CD4-positive, alpha-beta memory T cell (primary cell): ENCODE measurements at regions of chr2 and their contacts with region 1.

Region 1: GRCh38 chr2:180980106-180980942 is at the start of gene UBE2E3:
- DNase-seq: peak; percentile 77 to 83 (median 81)
- H3K4me3 ChIP-seq: peak within 1 kb of the TSS; percentile 59
- H3K4me3 Mint-ChIP-seq: peak within 1 kb of the TSS; percentile 94 to 99 (median 98)
- H3K27ac ChIP-seq: peak within 1 kb of the TSS; percentile 49
- H3K27ac Mint-ChIP-seq: peak within 1 kb of the TSS; percentile 89 to 98 (median 97)
- H3K4me1 ChIP-seq: peaks cover 35% of the 10 kb centered on the region
- H3K4me1 Mint-ChIP-seq: peaks cover 29 to 55% (median 44%) of the 10 kb centered on the region in 4 donors
- H3K27me3 ChIP-seq: no peaks in the 10 kb centered on the region
- H3K27me3 Mint-ChIP-seq: no peaks in the 10 kb centered on the region
- total RNA-seq, gene UBE2E3: 25.0 to 27.0 TPM

Region 2: DNA sequence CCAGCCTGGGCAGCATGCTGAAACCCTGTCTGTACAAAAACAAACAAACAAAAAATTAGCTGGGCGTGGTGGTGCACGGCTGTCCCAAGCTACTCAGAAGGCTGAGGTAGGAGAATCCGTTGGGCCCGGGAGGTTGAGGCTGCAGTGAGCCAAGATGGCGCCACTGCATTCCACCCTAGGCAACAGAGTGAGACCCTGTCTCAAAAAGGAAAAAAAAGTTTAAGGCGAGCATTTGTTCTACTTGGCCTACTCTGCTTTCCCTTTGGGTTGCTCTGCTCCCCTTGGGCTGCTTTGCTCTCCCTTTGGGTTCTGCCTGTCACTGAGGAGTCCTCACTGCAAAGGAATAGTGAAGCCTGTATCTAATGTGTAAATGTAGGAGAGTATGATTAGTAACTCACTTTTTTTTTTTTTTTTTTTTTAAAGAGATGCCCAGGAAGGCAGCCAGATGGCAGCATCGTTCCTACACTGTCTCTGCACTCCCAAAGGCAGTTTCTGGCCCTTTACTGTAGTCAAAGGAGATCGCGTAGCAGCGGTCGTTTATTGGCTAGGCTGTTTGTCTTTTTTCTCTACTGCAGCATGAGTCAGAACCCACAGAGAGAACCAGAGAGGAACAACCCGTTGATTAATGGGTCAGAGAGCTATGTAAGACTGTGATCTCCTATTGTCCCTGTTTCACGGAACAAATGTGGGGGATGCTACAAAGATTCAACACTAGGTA is 854.9 kb before region 1 on chr2:
- CTCF ChIA-PET with region 1: interaction called, 6 read pairs
- POLR2A ChIA-PET with region 1: no interaction called
- intact Hi-C with region 1: loop called (anchors 1 kb)
- DNase-seq: peak; percentile 28 to 44 (median 38)
- H3K4me3 ChIP-seq: no peak overlapping the region
- H3K4me3 Mint-ChIP-seq: peak overlapping the region in 1 of 8 donors; percentile 29
- H3K27ac ChIP-seq: no peak overlapping the region
- H3K27ac Mint-ChIP-seq: no peak overlapping the region
- H3K4me1 ChIP-seq: no peaks in the 10 kb centered on the region
- H3K4me1 Mint-ChIP-seq: peaks cover 0 to 7% (median 4%) of the 10 kb centered on the region in 4 donors
- H3K27me3 ChIP-seq: no peaks in the 10 kb centered on the region
- H3K27me3 Mint-ChIP-seq: peaks cover 0 to 7% of the 10 kb centered on the region in 2 donors

Region 3: GRCh38 chr2:180890781-180891180 is 89.5 kb before region 1 on chr2:
- CTCF ChIA-PET with region 1: no interaction called
- POLR2A ChIA-PET with region 1: no interaction called
- intact Hi-C with region 1: no loop called
- DNase-seq: no peak
- H3K4me3 ChIP-seq: no peak overlapping the region
- H3K4me3 Mint-ChIP-seq: no peak overlapping the region
- H3K27ac ChIP-seq: no peak overlapping the region
- H3K27ac Mint-ChIP-seq: no peak overlapping the region
- H3K4me1 ChIP-seq: no peaks in the 10 kb centered on the region
- H3K4me1 Mint-ChIP-seq: no peaks in the 10 kb centered on the region
- H3K27me3 ChIP-seq: no peaks in the 10 kb centered on the region
- H3K27me3 Mint-ChIP-seq: no peaks in the 10 kb centered on the region

Region 4: DNA sequence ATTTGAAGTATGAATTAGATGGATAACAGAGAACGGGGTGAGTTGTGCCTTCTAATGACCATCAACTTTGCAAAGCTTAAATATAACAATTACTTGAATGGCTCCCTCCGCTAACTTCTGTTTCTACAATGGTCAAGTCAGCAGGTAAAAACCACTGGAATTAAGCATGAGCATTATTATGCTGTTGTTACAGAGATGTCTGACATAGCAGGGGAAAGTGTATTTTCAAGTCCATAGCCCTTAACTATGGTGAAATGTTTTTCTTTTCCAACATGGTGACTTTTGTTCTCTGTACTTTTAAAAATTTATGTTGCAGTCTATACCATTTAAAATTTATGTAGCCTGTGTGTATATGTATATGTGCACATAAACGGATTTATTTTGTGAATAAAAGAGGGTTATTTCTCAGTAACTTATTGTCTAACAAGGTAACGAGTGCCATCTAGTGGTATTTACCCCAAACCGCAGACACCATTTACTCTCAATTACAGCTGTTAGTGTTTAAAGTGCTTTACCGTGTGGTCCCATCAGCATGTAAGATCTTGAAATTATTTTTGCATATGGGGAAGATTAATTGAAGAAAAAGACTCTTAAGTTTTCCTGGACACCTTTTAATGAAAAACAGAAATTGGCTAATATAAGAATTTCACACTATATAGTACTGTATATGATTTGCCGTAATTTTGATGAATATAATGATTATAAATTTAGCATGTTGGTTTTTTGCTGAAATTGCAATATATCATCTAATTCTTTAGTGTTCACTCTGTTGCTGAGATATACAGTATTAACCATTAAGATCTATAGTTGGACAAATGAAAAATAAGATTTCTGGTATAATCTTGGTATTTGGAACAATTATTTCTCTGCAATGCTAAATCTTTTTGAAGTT is 78.3 kb after region 1 on chr2:
- CTCF ChIA-PET with region 1: interaction called, 12 read pairs
- POLR2A ChIA-PET with region 1: interaction called, 3 read pairs
- intact Hi-C with region 1: loop called (anchors 5 kb)
- DNase-seq: peak; percentile 36 to 52 (median 45)
- H3K4me3 ChIP-seq: no peak overlapping the region
- H3K4me3 Mint-ChIP-seq: no peak overlapping the region
- H3K27ac ChIP-seq: no peak overlapping the region
- H3K27ac Mint-ChIP-seq: no peak overlapping the region
- H3K4me1 ChIP-seq: no peaks in the 10 kb centered on the region
- H3K4me1 Mint-ChIP-seq: peaks cover 0 to 12% (median 8%) of the 10 kb centered on the region in 4 donors
- H3K27me3 ChIP-seq: no peaks in the 10 kb centered on the region
- H3K27me3 Mint-ChIP-seq: no peaks in the 10 kb centered on the region

Region 5: DNA sequence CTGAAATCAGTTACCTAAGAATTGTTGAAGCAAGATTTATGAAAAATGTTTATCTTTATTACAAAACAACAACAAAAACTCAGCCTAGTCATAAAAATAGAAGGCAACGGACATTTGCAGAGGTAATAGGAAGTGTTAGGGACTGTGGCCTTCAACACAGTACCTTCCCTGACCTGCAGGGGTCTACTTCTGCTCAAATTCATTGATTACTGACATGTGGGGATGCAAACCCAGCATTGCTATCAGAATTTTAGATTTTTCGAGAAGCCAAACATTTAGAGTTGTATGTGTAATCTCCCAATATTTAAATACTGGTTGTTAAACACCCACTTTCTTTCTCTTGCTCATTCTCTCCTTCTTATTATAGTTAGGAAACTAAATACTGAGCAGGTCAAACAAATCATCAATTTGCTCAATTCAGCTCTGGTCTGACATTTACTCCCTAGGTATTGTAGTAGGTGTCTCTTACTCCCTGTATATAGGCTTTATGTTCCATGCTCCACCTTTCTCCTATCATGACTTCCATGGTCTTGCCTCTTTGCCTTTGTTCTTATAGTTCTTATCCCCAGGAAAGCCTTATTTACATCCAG is 198.6 kb after region 1 on chr2:
- CTCF ChIA-PET with region 1: no interaction called
- POLR2A ChIA-PET with region 1: no interaction called
- intact Hi-C with region 1: no loop called
- DNase-seq: peak in 4 of 5 donors; percentile 29 to 43 (median 37)
- H3K4me3 ChIP-seq: no peak overlapping the region
- H3K4me3 Mint-ChIP-seq: peak overlapping the region in 4 of 8 donors; percentile 19 to 41 (median 34)
- H3K27ac ChIP-seq: peak overlapping the region; percentile 1
- H3K27ac Mint-ChIP-seq: peak overlapping the region; percentile 12 to 90 (median 54)
- H3K4me1 ChIP-seq: peaks cover 52% of the 10 kb centered on the region
- H3K4me1 Mint-ChIP-seq: peaks cover 31 to 39% (median 36%) of the 10 kb centered on the region in 4 donors
- H3K27me3 ChIP-seq: no peaks in the 10 kb centered on the region
- H3K27me3 Mint-ChIP-seq: no peaks in the 10 kb centered on the region

Region 6: DNA sequence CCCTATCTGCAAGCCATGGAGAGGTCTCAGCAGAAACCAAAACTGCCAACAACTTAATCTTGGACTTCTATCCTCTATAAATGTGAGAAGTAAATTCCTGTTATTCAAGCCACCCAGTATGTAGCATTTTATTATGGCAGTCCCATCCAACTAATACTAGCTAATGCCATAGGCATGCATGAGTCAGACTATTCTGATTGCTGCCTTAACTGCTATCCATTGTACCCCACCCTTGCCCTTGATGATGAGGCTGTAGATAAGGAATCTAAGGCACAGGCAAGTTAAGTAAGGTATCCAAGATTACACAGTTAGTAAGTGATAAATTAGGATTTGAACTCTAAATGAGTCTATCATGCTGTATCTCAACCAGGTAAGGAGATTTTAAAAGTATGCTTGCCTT is 223.1 kb after region 1 on chr2:
- CTCF ChIA-PET with region 1: no interaction called
- POLR2A ChIA-PET with region 1: no interaction called
- intact Hi-C with region 1: no loop called
- DNase-seq: no peak
- H3K4me3 ChIP-seq: no peak overlapping the region
- H3K4me3 Mint-ChIP-seq: no peak overlapping the region
- H3K27ac ChIP-seq: no peak overlapping the region
- H3K27ac Mint-ChIP-seq: no peak overlapping the region
- H3K4me1 ChIP-seq: peaks cover 14% of the 10 kb centered on the region
- H3K4me1 Mint-ChIP-seq: peaks cover 20 to 23% (median 21%) of the 10 kb centered on the region in 4 donors
- H3K27me3 ChIP-seq: no peaks in the 10 kb centered on the region
- H3K27me3 Mint-ChIP-seq: no peaks in the 10 kb centered on the region

Region 7: GRCh38 chr2:181891966-181892798 is 911.9 kb after region 1 on chr2:
- CTCF ChIA-PET with region 1: no interaction called
- POLR2A ChIA-PET with region 1: interaction called, 3 read pairs
- intact Hi-C with region 1: loop called (anchors 2 kb)
- DNase-seq: peak; percentile 58 to 65 (median 60)
- H3K4me3 ChIP-seq: peak overlapping the region; percentile 70 to 86
- H3K4me3 Mint-ChIP-seq: peak overlapping the region; percentile 88 to 95 (median 92)
- H3K27ac ChIP-seq: peak overlapping the region; percentile 44
- H3K27ac Mint-ChIP-seq: peak overlapping the region; percentile 55 to 91 (median 87)
- H3K4me1 ChIP-seq: peaks cover 25% of the 10 kb centered on the region
- H3K4me1 Mint-ChIP-seq: peaks cover 23 to 51% (median 29%) of the 10 kb centered on the region in 4 donors
- H3K27me3 ChIP-seq: no peaks in the 10 kb centered on the region
- H3K27me3 Mint-ChIP-seq: peaks cover 13 to 15% of the 10 kb centered on the region in 2 donors